ENCODE measurements at regions of chr3 and their contacts with region 1.

Region 1: DNA sequence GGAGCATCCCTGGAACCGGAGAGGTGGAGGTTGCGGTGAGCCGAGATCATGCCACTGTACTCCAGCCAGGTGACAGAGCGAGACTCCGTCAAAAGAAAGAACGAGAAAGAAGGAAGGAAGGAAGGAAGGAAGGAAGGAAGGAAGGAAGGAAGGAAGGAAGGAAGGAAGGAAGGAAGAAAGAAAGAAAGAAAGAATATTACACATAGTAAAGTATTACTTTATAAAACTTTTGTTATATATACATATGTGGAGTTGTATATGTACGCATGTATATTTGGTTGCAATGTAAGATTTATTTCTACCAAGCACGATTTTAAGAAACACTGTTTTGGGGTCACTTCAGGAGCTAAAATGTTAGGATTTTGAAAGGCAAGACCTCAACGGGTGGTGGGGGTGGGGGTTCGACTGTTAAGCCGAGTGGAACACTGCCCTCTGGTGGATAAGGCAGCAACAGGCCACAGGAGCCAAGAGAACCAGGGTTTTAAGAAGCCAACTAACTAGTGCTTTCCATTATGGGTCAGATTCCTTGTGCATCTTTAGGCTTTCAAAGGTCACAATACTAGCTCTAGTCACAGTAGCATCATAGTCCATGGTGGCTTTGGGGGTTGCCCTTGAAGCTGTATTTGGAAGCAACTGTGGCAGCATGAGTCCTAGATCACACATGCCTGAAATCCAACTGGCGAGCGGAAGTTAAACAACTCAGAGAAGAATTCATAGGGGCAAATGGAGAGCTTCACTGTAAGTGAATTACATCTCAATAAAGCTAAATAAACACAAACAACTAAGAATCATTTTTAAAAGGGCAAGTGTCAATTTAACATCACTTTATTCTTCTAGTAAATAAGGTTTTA is 22.5 kb downstream of the GLB1 start:
- DNase-seq: peak; percentile 24 to 67 (median 59)
- ATAC-seq: peak; percentile 88
- H3K4me3 ChIP-seq: no peak overlapping the region
- H3K4me3 Mint-ChIP-seq: peak overlapping the region in 1 of 10 donors; percentile 39
- H3K27ac ChIP-seq: no peak overlapping the region
- H3K27ac Mint-ChIP-seq: no peak overlapping the region
- H3K4me1 ChIP-seq: peaks cover 0 to 4% of the 10 kb centered on the region in 2 donors
- H3K4me1 Mint-ChIP-seq: peaks cover 11 to 39% (median 25%) of the 10 kb centered on the region in 7 donors
- H3K27me3 ChIP-seq: no peaks in the 10 kb centered on the region
- H3K27me3 Mint-ChIP-seq: no peaks in the 10 kb centered on the region

Region 2: GRCh38 chr3:32733631-32734229 is 340.7 kb before region 1 on chr3:
- CTCF ChIA-PET with region 1: interaction called, 3 read pairs
- POLR2A ChIA-PET with region 1: no interaction called
- intact Hi-C with region 1: loop called in 1 of 2 experiments (anchors 2 kb)
- DNase-seq: peak in 2 of 9 donors; percentile 3 to 11
- ATAC-seq: peak; percentile 42
- H3K4me3 ChIP-seq: no peak overlapping the region
- H3K4me3 Mint-ChIP-seq: no peak overlapping the region
- H3K27ac ChIP-seq: no peak overlapping the region
- H3K27ac Mint-ChIP-seq: no peak overlapping the region
- H3K4me1 ChIP-seq: no peaks in the 10 kb centered on the region
- H3K4me1 Mint-ChIP-seq: peaks cover 0 to 1% (median 0%) of the 10 kb centered on the region in 7 donors
- H3K27me3 ChIP-seq: no peaks in the 10 kb centered on the region
- H3K27me3 Mint-ChIP-seq: no peaks in the 10 kb centered on the region

Region 3: DNA sequence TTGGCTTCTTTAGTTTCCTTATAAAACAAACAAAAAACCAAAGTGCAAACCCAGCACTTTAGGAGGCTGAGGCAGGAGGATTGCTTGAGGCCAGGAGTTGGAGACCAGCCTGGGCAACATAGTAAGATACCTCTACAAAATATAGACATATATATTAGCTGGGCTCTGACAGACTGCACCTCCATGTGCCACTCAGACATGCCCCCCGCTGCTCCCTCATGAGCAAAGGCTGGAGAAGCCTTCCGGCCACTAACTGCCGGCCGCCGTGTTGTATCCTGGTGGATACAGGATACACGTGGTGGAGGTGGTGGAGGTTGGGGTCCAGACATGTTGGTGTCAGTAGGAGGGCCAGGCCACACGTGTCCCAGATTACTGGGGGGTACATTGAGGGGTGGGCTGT is 152.4 kb before region 1 on chr3:
- CTCF ChIA-PET with region 1: no interaction called
- POLR2A ChIA-PET with region 1: no interaction called
- intact Hi-C with region 1: no loop called
- DNase-seq: no peak
- ATAC-seq: no peak
- H3K4me3 ChIP-seq: no peak overlapping the region
- H3K4me3 Mint-ChIP-seq: no peak overlapping the region
- H3K27ac ChIP-seq: no peak overlapping the region
- H3K27ac Mint-ChIP-seq: no peak overlapping the region
- H3K4me1 ChIP-seq: no peaks in the 10 kb centered on the region
- H3K4me1 Mint-ChIP-seq: no peaks in the 10 kb centered on the region
- H3K27me3 ChIP-seq: no peaks in the 10 kb centered on the region
- H3K27me3 Mint-ChIP-seq: peaks cover 0 to 18% (median 0%) of the 10 kb centered on the region in 5 donors

Region 4: DNA sequence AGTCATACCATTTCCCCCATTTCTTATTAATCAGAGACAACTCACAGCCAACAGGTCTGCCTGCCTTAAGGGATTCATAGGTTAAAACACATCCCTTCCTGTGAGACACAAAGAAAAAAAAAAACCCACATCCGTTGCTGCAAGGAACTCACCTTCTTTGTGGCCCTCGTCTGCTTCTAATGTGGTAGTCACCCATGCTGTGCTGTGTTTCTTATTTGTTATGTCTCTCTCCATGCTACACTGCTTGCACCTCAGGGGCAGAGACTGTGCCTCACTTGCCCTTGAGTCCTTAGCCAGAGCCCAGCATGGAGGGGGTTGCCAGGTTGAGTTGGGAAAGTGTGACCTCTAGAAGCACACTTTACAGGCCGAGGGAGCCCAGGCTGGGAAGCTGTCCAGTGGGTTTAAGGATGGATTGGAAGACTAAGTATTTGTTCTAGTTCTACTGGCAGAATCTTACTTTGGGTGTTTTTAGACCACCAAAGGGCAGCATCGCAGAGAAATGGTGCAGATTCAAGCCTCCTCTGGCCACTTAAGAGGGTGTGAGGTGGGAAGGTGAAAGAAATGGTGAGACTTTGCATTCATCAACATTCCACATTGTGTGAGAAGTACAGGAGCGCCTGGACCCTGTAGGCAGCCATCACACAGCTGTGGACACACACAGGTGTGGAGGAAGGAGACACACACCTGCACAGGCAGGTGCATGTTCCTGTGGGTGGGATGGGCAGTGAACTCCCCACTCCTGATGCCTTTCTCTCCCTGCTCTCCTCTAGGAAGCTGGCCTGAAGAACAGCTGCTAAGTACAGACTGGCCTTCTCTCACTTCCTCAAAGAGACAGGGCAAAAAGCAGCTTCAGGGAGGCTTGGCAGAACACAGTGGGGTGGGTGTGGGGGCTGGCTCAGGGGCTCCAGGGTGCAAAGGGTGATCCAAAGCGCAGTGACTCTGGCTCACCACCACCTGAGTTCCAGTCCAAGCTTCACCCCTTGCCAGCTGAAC is 26.3 kb before region 1 on chr3:
- CTCF ChIA-PET with region 1: interaction called, 11 read pairs
- POLR2A ChIA-PET with region 1: interaction called, 5 read pairs
- intact Hi-C with region 1: no loop called
- DNase-seq: peak in 8 of 9 donors; percentile 50 to 89 (median 84)
- ATAC-seq: peak; percentile 91
- H3K4me3 ChIP-seq: peak overlapping the region; percentile 28
- H3K4me3 Mint-ChIP-seq: peak overlapping the region; percentile 65 to 90 (median 82)
- H3K27ac ChIP-seq: no peak overlapping the region
- H3K27ac Mint-ChIP-seq: peak overlapping the region; percentile 58 to 98 (median 79)
- H3K4me1 ChIP-seq: peaks cover 60 to 82% of the 10 kb centered on the region in 2 donors
- H3K4me1 Mint-ChIP-seq: peaks cover 53 to 78% (median 69%) of the 10 kb centered on the region in 7 donors
- H3K27me3 ChIP-seq: no peaks in the 10 kb centered on the region
- H3K27me3 Mint-ChIP-seq: no peaks in the 10 kb centered on the region

Region 5: DNA sequence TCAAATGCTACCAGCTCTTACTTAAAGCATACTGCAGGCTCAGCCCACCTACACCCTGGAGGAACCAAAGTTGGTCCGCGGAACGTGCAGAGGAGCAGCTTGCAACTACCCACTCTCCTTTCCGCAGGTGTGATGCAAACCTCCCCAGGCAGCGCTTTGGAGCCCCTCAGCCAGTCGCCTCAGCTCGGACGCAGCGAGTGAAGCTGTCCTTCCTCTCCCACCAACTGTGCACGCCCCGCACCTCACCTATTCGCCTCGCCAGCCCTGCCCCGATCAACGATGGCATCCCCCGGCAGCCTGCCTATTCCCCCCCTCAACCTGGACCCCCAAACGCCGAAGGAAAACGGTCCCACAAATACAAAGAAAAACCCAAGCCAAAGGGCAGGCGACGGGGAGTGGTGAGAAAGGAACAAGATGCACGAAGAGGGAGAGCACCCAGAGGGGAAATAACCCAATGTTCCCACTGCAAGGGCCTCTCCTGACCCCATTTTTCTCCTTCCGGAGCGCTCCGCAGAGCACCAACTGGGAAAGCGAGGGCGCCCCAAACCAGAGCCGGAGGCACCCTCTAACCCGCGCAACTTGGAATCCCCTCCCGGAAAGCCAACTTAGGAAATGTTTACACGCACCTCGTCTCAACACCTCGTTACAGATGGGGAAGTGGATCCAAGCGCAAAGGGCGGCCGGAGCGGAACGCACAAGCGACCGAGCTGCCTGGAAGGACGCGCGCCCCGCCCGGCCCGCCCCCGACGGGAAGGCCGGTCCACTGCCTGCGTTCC is 21.8 kb after region 1 on chr3:
- CTCF ChIA-PET with region 1: interaction called, 3 read pairs
- POLR2A ChIA-PET with region 1: no interaction called
- intact Hi-C with region 1: loop called in 1 of 2 experiments (anchors 1 kb)
- DNase-seq: peak in 8 of 9 donors; percentile 23 to 52 (median 39)
- ATAC-seq: peak; percentile 71
- H3K4me3 ChIP-seq: peak overlapping the region; percentile 90
- H3K4me3 Mint-ChIP-seq: peak overlapping the region; percentile 90 to 98 (median 94)
- H3K27ac ChIP-seq: peak overlapping the region; percentile 71
- H3K27ac Mint-ChIP-seq: peak overlapping the region; percentile 66 to 87 (median 80)
- H3K4me1 ChIP-seq: peaks cover 0 to 17% of the 10 kb centered on the region in 2 donors
- H3K4me1 Mint-ChIP-seq: peaks cover 24 to 45% (median 37%) of the 10 kb centered on the region in 7 donors
- H3K27me3 ChIP-seq: no peaks in the 10 kb centered on the region
- H3K27me3 Mint-ChIP-seq: peaks cover 0 to 4% (median 0%) of the 10 kb centered on the region in 5 donors

Region 6: GRCh38 chr3:33231756-33232465 is 157.5 kb after region 1 on chr3:
- CTCF ChIA-PET with region 1: no interaction called
- POLR2A ChIA-PET with region 1: no interaction called
- intact Hi-C with region 1: no loop called
- DNase-seq: no peak
- ATAC-seq: no peak
- H3K4me3 ChIP-seq: no peak overlapping the region
- H3K4me3 Mint-ChIP-seq: no peak overlapping the region
- H3K27ac ChIP-seq: no peak overlapping the region
- H3K27ac Mint-ChIP-seq: no peak overlapping the region
- H3K4me1 ChIP-seq: no peaks in the 10 kb centered on the region
- H3K4me1 Mint-ChIP-seq: peaks cover 0 to 2% (median 0%) of the 10 kb centered on the region in 7 donors
- H3K27me3 ChIP-seq: no peaks in the 10 kb centered on the region
- H3K27me3 Mint-ChIP-seq: peaks cover 7 to 47% (median 35%) of the 10 kb centered on the region in 5 donors

Region 7: GRCh38 chr3:33372218-33373081 is 298.0 kb after region 1 on chr3:
- CTCF ChIA-PET with region 1: interaction called, 7 read pairs
- POLR2A ChIA-PET with region 1: interaction called, 3 read pairs
- intact Hi-C with region 1: loop called in 1 of 2 experiments (anchors 1 kb)
- DNase-seq: peak in 8 of 9 donors; percentile 14 to 57 (median 38)
- ATAC-seq: peak; percentile 80
- H3K4me3 ChIP-seq: no peak overlapping the region
- H3K4me3 Mint-ChIP-seq: no peak overlapping the region
- H3K27ac ChIP-seq: no peak overlapping the region
- H3K27ac Mint-ChIP-seq: no peak overlapping the region
- H3K4me1 ChIP-seq: peaks cover 0 to 4% of the 10 kb centered on the region in 2 donors
- H3K4me1 Mint-ChIP-seq: peaks cover 2 to 8% (median 6%) of the 10 kb centered on the region in 7 donors
- H3K27me3 ChIP-seq: peaks cover 0 to 6% of the 10 kb centered on the region in 2 donors
- H3K27me3 Mint-ChIP-seq: peaks cover 12 to 32% (median 22%) of the 10 kb centered on the region in 5 donors